T-cell (primary cell): ENCODE measurements at regions of chr6 and their contacts with region 1.

Region 1: DNA sequence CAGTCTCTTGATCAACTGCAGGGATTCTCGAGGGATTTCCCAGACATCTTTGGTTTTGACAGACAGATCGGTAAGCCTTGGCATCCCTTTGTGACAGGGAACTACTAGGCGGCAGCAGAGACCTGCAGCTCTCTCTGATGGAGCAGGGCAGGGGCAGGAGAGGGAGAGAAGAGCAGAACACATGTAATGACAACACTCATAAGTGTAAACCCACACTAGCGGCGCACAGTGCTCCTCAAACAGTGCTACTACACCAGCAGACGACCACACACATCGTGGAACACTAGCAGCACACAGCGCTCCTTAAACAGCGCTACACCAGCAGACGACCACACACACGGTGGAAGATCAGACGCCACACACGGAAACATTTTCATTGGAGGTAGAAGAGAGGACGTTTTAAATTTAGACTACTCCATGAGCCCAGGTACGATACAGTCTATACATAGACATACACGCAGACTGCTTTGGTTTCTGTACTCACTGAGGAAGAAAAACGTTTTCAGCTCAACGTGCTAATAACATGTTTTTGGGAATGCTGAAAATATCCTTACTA is 94.5 kb upstream of the TRAF3IP2 start:
- DNase-seq: no peak
- ATAC-seq: peak in 1 of 4 experiments; percentile 16
- H3K4me3 ChIP-seq: no peak overlapping the region
- H3K4me3 Mint-ChIP-seq: peak overlapping the region in 1 of 3 donors; percentile 5
- H3K27ac ChIP-seq: no peak overlapping the region
- H3K27ac Mint-ChIP-seq: peak overlapping the region in 1 of 2 donors; percentile 2
- H3K4me1 ChIP-seq: peaks cover 8 to 15% of the 10 kb centered on the region in 2 experiments
- H3K4me1 Mint-ChIP-seq: peaks cover 44 to 53% (median 50%) of the 10 kb centered on the region in 3 donors
- H3K27me3 ChIP-seq: no peaks in the 10 kb centered on the region
- H3K27me3 Mint-ChIP-seq: no peaks in the 10 kb centered on the region

Region 2: DNA sequence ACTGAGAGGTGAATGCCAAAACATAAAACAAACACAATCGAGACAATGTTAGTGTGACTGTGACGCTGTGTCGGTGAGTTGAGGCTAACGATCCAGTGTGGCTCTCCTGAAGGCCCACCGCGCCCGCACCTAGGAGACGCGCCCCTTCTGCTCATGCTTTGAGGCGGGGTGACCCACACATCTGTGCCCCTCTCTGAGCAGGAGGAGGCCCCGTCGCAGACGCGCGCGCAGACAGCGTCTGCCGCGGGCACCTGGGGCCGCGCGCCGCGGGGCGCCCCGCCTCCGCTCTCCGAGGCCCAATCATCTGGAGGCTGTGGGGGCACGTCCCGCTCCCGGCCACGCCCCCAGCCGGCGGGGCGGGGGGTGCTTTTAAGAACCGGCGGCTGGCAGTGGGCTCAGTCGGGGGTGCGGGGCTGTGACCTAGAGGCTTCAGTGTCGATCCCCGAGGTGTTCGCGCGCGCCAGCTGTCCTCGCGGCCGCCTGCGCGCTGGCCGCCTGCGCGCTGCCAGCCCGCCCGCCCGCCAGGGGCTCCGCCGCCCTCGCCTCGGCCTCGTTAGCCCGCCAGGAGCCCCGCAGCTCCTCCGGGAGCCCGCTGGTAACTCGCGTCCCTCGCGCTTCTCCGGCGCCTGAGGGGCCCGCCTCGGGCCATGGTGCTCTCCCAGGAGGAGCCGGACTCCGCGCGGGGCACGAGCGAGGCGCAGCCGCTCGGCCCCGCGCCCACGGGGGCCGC is 612.9 kb before region 1 on chr6 and contains the start of gene SLC16A10:
- CTCF ChIA-PET with region 1: no interaction called
- POLR2A ChIA-PET with region 1: interaction called in 1 of 2 experiments, 18 read pairs
- DNase-seq: peak; percentile 61 to 91 (median 82)
- ATAC-seq: peak; percentile 85 to 93 (median 90)
- H3K4me3 ChIP-seq: peak within 1 kb of the TSS; percentile 54 to 94
- H3K4me3 Mint-ChIP-seq: peak within 1 kb of the TSS; percentile 86 to 96 (median 89)
- H3K27ac ChIP-seq: peak within 1 kb of the TSS; percentile 32
- H3K27ac Mint-ChIP-seq: peak within 1 kb of the TSS; percentile 80 to 94
- H3K4me1 ChIP-seq: peaks cover 8 to 11% of the 10 kb centered on the region in 2 experiments
- H3K4me1 Mint-ChIP-seq: peaks cover 36 to 39% (median 39%) of the 10 kb centered on the region in 3 donors
- H3K27me3 ChIP-seq: peaks cover 0 to 3% of the 10 kb centered on the region in 2 experiments
- H3K27me3 Mint-ChIP-seq: peaks cover 0 to 11% of the 10 kb centered on the region in 2 donors
- total RNA-seq, gene SLC16A10: 10.2 to 16.5 (median 14.3) TPM

Region 3: GRCh38 chr6:111237852-111238251 is 462.4 kb before region 1 on chr6:
- CTCF ChIA-PET with region 1: no interaction called
- POLR2A ChIA-PET with region 1: interaction called in 1 of 2 experiments, 12 read pairs
- DNase-seq: no peak
- ATAC-seq: no peak
- H3K4me3 ChIP-seq: no peak overlapping the region
- H3K4me3 Mint-ChIP-seq: no peak overlapping the region
- H3K27ac ChIP-seq: no peak overlapping the region
- H3K27ac Mint-ChIP-seq: no peak overlapping the region
- H3K4me1 ChIP-seq: no peaks in the 10 kb centered on the region
- H3K4me1 Mint-ChIP-seq: no peaks in the 10 kb centered on the region
- H3K27me3 ChIP-seq: peaks cover 0 to 2% of the 10 kb centered on the region in 2 experiments
- H3K27me3 Mint-ChIP-seq: peaks cover 0 to 1% of the 10 kb centered on the region in 2 donors

Region 4: DNA sequence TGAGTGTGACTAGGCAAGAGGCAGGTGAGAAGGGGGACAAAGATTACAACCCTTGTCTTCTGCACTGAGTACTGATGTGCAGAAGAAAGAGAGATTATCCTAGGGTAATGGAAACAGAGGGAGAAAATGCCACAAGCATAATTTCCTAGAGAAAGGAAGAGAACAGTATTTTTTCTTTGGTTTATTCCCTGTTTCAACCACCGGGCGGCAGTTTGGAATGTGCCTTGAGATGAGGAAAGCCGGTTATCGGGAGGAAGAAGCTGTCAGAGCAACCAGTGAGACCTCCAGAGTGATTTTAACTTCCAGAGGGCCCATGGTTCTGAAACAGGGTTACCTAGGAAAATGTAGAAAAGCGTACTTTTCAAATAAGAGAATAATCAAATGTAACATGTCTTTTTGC is 338.6 kb before region 1 on chr6:
- CTCF ChIA-PET with region 1: interaction called in 1 of 2 experiments, 10 read pairs
- POLR2A ChIA-PET with region 1: no interaction called
- DNase-seq: peak in 2 of 35 experiments; percentile 2 to 24
- ATAC-seq: no peak
- H3K4me3 ChIP-seq: no peak overlapping the region
- H3K4me3 Mint-ChIP-seq: no peak overlapping the region
- H3K27ac ChIP-seq: no peak overlapping the region
- H3K27ac Mint-ChIP-seq: no peak overlapping the region
- H3K4me1 ChIP-seq: no peaks in the 10 kb centered on the region
- H3K4me1 Mint-ChIP-seq: no peaks in the 10 kb centered on the region
- H3K27me3 ChIP-seq: no peaks in the 10 kb centered on the region
- H3K27me3 Mint-ChIP-seq: no peaks in the 10 kb centered on the region

Region 5: DNA sequence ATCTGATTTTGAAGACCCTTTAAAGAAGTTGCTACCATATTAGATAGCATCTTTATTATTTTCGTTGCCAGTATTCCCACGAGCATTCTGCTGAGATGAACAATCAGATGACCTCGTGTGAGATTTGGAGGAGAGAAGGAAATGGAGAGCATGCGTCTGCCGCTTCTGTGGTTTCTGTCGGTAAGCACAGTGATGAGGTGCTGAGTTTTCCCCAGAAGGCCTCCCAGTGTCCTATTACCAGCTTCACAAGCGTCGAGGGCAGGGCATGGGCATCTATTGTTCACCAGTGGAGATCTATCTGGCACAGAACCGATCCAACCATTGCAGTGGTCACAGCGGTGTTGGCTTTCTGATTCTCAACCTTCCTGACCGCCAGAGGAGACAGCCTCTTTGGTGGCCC is 123.9 kb before region 1 on chr6:
- CTCF ChIA-PET with region 1: interaction called in 1 of 2 experiments, 12 read pairs
- POLR2A ChIA-PET with region 1: no interaction called
- DNase-seq: no peak
- ATAC-seq: no peak
- H3K4me3 ChIP-seq: no peak overlapping the region
- H3K4me3 Mint-ChIP-seq: no peak overlapping the region
- H3K27ac ChIP-seq: no peak overlapping the region
- H3K27ac Mint-ChIP-seq: peak overlapping the region; percentile 36 to 40
- H3K4me1 ChIP-seq: no peaks in the 10 kb centered on the region
- H3K4me1 Mint-ChIP-seq: peaks cover 7 to 27% (median 22%) of the 10 kb centered on the region in 3 donors
- H3K27me3 ChIP-seq: no peaks in the 10 kb centered on the region
- H3K27me3 Mint-ChIP-seq: no peaks in the 10 kb centered on the region

Region 6: DNA sequence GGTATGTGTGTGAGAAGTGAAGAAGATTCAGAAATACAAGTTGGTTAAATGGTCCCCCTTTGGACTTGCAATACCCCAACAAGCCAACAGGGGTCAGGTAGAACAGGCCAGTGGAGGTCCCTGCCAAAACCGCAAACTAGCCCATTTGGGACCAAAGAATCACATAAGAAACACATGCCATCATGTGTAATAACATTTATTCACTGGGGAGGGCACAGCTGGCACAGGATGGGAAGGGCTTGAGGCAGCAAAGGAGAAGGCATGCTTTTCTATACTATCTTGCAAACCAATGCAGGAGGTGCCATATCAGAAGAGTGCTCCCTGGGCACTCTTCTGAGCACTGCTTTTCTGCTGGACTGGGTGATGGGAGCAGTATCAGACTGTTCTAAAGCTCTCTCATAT is 21.5 kb after region 1 on chr6:
- CTCF ChIA-PET with region 1: no interaction called
- POLR2A ChIA-PET with region 1: no interaction called
- DNase-seq: peak in 26 of 35 experiments; percentile 8 to 70 (median 32)
- ATAC-seq: no peak
- H3K4me3 ChIP-seq: no peak overlapping the region
- H3K4me3 Mint-ChIP-seq: peak overlapping the region in 1 of 3 donors; percentile 42
- H3K27ac ChIP-seq: peak overlapping the region; percentile 3
- H3K27ac Mint-ChIP-seq: peak overlapping the region; percentile 82 to 87
- H3K4me1 ChIP-seq: peaks cover 39 to 69% of the 10 kb centered on the region in 2 experiments
- H3K4me1 Mint-ChIP-seq: peaks cover 71 to 87% (median 86%) of the 10 kb centered on the region in 3 donors
- H3K27me3 ChIP-seq: no peaks in the 10 kb centered on the region
- H3K27me3 Mint-ChIP-seq: no peaks in the 10 kb centered on the region